ENCODE measurements at regions of chr12 and their contacts with region 1.

Region 1: DNA sequence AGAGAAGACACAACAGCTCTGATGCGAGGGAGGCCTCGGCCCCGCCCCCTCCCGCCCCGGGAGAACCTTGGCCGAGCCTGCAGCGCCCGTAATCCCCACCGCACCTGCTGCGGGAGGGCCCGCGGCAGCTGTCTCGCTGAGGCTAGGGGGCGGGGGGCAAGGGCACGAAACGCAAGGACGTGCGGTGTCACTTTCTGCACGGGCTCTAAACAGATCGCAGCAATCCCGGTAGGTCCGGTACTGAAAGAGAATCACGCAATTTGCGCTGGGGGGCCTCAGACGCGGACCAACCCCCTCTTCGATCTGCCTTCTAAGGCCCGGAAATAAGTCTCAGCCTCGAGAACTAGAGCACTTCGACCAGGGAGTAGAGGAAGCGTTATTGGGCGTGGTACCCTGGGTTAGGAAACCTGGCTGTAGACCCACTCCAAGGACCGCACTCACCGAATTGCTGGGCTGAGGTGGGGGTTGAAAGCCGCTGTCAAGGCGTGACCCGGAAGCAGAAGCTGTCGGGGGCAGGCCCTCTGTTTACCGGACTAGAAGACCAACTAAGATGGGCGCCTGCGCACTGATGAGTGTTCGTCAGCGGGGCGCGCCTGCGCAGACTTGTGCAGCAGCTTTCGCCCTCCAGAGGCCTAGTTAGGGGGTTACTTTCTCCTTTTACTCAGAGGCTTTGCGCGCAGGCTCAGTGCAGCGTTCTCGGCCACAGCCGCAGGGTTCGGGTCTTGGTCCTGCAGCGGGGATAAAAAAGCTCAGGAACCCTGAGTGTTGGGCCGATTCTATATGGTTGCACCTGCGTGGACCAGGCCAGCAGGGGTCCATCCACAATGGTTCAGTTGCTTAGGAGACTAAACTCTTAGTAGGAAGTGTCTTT is at the start of gene ASB8:
- DNase-seq: peak; percentile 99
- H3K4me3 ChIP-seq: peak within 1 kb of the TSS; percentile 32 to 95 (median 76)
- H3K27ac ChIP-seq: peak within 1 kb of the TSS; percentile 78 to 94 (median 88)
- H3K4me1 ChIP-seq: peaks cover 4 to 21% (median 8%) of the 10 kb centered on the region in 4 donors
- H3K27me3 ChIP-seq: no peaks in the 10 kb centered on the region
- CTCF ChIP-seq: peak; percentile 35 to 74 (median 50)
- EP300 ChIP-seq: no peak
- POLR2A ChIP-seq: peak; percentile 53
- total RNA-seq, gene ASB8: 13.3 to 39.0 (median 23.3) TPM

Region 2: GRCh38 chr12:47715393-47715876 is 441.8 kb before region 1 on chr12:
- in situ Hi-C with region 1: no loop called
- intact Hi-C with region 1: no loop called
- DNase-seq: peak; percentile 84
- H3K4me3 ChIP-seq: no peak overlapping the region
- H3K27ac ChIP-seq: peak overlapping the region; percentile 5 to 93 (median 88)
- H3K4me1 ChIP-seq: peaks cover 24 to 36% (median 26%) of the 10 kb centered on the region in 4 donors
- H3K27me3 ChIP-seq: no peaks in the 10 kb centered on the region
- CTCF ChIP-seq: peak; percentile 72 to 84 (median 77)
- EP300 ChIP-seq: no peak
- POLR2A ChIP-seq: no peak

Region 3: GRCh38 chr12:47870175-47870781 is 287.0 kb before region 1 on chr12:
- in situ Hi-C with region 1: loop called in 1 of 4 experiments (anchors 25 kb)
- intact Hi-C with region 1: no loop called
- DNase-seq: peak; percentile 62
- H3K4me3 ChIP-seq: no peak overlapping the region
- H3K27ac ChIP-seq: peak overlapping the region; percentile 10 to 71 (median 38)
- H3K4me1 ChIP-seq: peaks cover 0 to 16% (median 12%) of the 10 kb centered on the region in 4 donors
- H3K27me3 ChIP-seq: no peaks in the 10 kb centered on the region
- CTCF ChIP-seq: peak; percentile 10 to 45 (median 38)
- EP300 ChIP-seq: no peak
- POLR2A ChIP-seq: no peak

Region 4: DNA sequence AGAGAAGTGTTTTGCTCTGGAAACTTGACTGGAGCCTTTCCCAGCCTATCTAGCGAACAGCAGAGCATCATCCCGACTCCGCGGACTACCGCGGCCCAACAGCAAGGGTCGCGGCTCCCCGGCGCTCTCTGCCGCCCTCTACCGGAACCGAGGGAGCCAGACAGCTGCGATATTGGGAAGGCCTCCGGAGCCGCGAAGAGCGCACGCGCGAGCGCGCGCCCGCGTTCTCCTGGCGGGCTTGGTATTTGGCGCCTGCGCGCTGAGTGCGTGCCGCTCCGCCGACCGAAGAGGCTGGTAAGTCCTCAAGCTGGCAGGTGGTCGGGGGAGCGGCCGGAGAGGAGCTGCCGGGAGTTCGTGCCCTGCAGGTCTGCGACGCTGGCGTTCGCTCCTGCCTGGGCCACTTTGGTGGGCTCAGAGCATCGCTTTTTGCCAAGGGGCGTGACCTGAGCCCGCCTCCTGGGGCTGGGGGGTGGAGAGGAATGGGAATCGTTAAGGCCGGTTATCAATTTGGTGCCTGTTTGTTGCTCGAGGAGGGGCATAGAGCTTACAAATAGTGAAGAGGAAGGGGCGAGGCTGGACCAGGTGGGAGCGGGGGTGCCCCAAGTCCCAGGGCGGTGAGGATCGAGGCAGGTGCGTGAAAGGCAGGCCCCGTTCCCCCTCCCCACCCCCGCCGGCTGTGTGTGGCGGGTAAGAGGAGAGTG is 193.8 kb before region 1 on chr12 and contains the start of gene TMEM106C:
- in situ Hi-C with region 1: loop called (anchors 10 to 25 kb)
- intact Hi-C with region 1: no loop called
- DNase-seq: peak; percentile 94
- H3K4me3 ChIP-seq: peak within 1 kb of the TSS; percentile 70 to 100 (median 82)
- H3K27ac ChIP-seq: peak within 1 kb of the TSS; percentile 80 to 87 (median 86)
- H3K4me1 ChIP-seq: peaks cover 15 to 29% (median 20%) of the 10 kb centered on the region in 4 donors
- H3K27me3 ChIP-seq: no peaks in the 10 kb centered on the region
- CTCF ChIP-seq: peak; percentile 96 to 98 (median 97)
- EP300 ChIP-seq: no peak
- POLR2A ChIP-seq: peak; percentile 72
- total RNA-seq, gene TMEM106C: 51.9 to 258 (median 113) TPM

Region 5: GRCh38 chr12:48105862-48106680 is 51.2 kb before region 1 on chr12 and contains the start of gene SENP1:
- in situ Hi-C with region 1: loop called in 1 of 4 experiments (anchors 10 kb)
- intact Hi-C with region 1: loop called (anchors 10 kb)
- DNase-seq: peak; percentile 90
- H3K4me3 ChIP-seq: peak within 1 kb of the TSS; percentile 83 to 91 (median 87)
- H3K27ac ChIP-seq: peak within 1 kb of the TSS; percentile 90 to 94 (median 93)
- H3K4me1 ChIP-seq: peaks cover 8 to 21% (median 17%) of the 10 kb centered on the region in 4 donors
- H3K27me3 ChIP-seq: no peaks in the 10 kb centered on the region
- CTCF ChIP-seq: peak; percentile 23 to 77 (median 34)
- EP300 ChIP-seq: no peak
- POLR2A ChIP-seq: peak; percentile 38
- total RNA-seq, gene SENP1: 2.2 to 20.3 (median 10.5) TPM

Region 6: DNA sequence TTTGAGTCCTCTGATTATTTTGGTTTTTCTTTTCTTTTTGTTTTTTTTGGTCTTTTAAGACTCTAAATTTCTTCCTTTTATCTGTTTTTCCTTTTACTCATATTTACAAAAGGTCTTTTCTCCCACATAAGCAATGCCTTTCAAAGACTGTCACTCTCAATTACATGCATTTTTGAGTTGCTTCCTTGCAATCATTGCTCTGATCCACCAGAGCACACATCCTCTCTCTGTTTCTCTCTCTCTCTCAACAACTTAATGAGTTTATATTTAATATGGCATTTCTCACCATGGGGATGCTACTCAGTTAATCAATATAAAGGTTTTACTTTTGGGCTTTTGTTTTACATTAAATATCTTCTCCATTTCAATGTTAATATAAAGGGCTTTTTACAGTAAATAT is 108.5 kb after region 1 on chr12:
- in situ Hi-C with region 1: no loop called
- intact Hi-C with region 1: no loop called
- DNase-seq: no peak
- H3K4me3 ChIP-seq: no peak overlapping the region
- H3K27ac ChIP-seq: no peak overlapping the region
- H3K4me1 ChIP-seq: no peaks in the 10 kb centered on the region
- H3K27me3 ChIP-seq: peaks cover 4% of the 10 kb centered on the region
- CTCF ChIP-seq: no peak
- EP300 ChIP-seq: no peak
- POLR2A ChIP-seq: no peak